ENCODE measurements at regions of chr5 and their contacts with region 1.

Region 1: DNA sequence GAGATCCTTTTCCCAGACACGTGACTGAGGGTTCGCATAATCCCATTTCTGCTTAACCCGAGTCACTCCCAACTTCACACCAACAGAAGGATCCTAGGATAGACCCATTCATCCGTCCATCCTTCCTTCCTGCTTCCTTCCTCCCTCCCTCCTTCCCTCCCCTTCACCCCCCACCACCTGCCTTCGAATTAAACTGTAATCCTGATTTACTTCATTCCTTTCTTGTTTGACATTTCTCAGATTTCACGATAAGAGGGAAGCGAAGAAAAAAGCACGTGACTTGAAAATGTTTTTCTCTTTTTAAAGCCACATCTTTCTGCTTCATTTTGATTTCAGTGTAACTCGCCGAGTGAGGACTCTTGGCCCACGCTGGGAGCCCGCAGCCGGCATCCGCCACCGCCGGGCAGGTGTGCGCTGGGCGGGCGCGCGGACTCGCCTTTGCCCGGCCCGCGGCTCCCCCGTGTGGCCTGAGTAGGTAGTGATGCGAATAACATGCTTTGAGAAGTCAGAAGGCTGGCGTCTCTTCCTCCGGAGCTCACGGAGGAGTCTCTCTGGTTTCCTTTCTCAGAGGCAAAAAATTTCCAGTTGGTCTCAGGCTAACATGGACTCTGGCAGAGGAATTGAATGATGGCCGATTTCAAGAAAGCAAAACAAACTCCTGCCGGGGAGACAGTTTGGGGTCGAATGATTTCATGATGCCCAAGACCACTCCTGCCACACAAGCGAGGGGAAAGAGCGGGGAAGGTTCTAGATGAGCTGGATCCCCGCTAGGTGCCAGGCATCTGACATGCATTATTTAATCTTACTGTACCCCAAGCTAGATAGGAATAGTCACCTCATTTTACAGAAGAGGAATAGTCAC is 117.7 kb downstream of the SLC12A2 start:
- DNase-seq: peak; percentile 73 to 76 (median 74)
- ATAC-seq: peak; percentile 96
- H3K4me3 ChIP-seq: peak overlapping the region; percentile 15; the same call in 1 of the 2 replicates
- H3K27ac ChIP-seq: no peak overlapping the region
- H3K4me1 ChIP-seq: peaks cover 6 to 14% of the 10 kb centered on the region in 2 experiments
- H3K27me3 ChIP-seq: no peaks in the 10 kb centered on the region
- CTCF ChIP-seq: peak; percentile 81 to 86 (median 83)
- EP300 ChIP-seq: no peak
- POLR2A ChIP-seq: no peak
- RAD21 ChIP-seq: peak; percentile 93 to 95

Region 2: DNA sequence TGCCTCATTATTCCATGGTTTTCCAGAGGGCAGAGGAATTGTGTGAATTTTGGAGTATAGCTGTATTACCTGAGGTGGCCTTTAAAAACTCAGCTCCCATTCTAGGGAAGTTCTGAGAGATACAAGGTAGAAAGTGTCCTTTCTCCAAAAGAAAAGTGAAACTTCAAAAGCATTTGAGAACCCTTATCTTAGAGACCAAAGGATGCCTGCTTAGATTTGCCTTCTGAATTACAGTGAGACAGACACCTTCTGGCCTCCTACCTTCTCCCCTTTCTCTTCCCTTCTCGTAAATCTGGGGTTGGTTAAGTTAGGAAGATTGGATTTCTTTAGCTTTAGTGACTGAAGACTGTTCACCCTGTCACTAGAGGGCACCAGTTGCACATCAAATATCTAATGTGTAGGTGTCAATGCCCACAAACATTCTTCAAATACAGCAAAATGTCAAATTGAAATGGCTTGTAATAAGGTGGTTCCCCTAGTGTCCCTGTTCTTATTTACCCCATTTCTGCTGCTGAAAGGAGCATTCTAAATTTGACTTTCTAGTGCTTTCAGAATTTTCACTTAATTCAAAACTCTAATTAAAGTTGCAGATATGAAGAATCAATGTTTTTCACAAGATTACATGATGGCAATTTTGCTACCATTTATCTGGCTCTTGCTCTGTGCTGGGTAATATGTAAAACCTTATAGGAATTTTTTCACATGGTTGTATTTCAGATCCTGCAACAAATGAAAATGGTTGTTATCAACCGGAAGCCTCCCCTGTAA is 637.1 kb before region 1 on chr5:
- CTCF ChIA-PET with region 1: interaction called, 6 read pairs
- POLR2A ChIA-PET with region 1: no interaction called
- in situ Hi-C with region 1: no loop called
- intact Hi-C with region 1: loop called (anchors 1 kb)
- DNase-seq: peak; percentile 27 to 72 (median 38)
- ATAC-seq: peak; percentile 91
- H3K4me3 ChIP-seq: no peak overlapping the region
- H3K27ac ChIP-seq: no peak overlapping the region
- H3K4me1 ChIP-seq: no peaks in the 10 kb centered on the region; a peak in 1 of 5 replicates
- H3K27me3 ChIP-seq: peaks cover 0 to 8% of the 10 kb centered on the region in 2 experiments; a peak in 2 of 5 replicates
- CTCF ChIP-seq: peak; percentile 53 to 77 (median 73); a peak in 5 of 6 replicates
- EP300 ChIP-seq: no peak
- POLR2A ChIP-seq: no peak
- RAD21 ChIP-seq: peak; percentile 73 to 82

Region 3: DNA sequence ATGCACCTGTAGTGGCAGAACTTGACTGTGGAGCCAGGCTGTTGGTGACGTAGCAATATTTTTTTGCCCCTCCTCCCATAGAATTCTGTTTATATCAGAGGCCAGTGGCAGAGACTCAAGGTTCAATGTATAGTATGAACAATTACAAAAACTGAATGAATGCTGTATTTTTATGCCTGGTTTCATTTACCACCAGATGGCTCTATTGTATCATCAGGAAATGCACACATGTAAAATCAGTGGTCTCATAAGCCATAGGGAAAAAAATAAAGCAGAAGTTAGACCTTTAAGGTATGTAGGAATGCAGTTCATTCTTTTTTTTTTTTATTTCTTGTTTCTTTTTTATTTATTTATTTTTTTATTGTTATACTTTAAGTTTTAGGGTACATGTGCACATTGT is 454.5 kb before region 1 on chr5:
- CTCF ChIA-PET with region 1: interaction called, 3 read pairs
- POLR2A ChIA-PET with region 1: no interaction called
- in situ Hi-C with region 1: loop called (anchors 10 kb)
- intact Hi-C with region 1: loop called (anchors 1 kb)
- DNase-seq: peak in 2 of 4 experiments; percentile 18 to 21
- ATAC-seq: peak; percentile 72
- H3K4me3 ChIP-seq: no peak overlapping the region
- H3K27ac ChIP-seq: no peak overlapping the region
- H3K4me1 ChIP-seq: no peaks in the 10 kb centered on the region
- H3K27me3 ChIP-seq: no peaks in the 10 kb centered on the region; a peak in 1 of 5 replicates
- CTCF ChIP-seq: peak; percentile 28 to 62 (median 31); a peak in 4 of 6 replicates
- EP300 ChIP-seq: no peak
- POLR2A ChIP-seq: no peak
- RAD21 ChIP-seq: peak; percentile 53 to 66

Region 4: DNA sequence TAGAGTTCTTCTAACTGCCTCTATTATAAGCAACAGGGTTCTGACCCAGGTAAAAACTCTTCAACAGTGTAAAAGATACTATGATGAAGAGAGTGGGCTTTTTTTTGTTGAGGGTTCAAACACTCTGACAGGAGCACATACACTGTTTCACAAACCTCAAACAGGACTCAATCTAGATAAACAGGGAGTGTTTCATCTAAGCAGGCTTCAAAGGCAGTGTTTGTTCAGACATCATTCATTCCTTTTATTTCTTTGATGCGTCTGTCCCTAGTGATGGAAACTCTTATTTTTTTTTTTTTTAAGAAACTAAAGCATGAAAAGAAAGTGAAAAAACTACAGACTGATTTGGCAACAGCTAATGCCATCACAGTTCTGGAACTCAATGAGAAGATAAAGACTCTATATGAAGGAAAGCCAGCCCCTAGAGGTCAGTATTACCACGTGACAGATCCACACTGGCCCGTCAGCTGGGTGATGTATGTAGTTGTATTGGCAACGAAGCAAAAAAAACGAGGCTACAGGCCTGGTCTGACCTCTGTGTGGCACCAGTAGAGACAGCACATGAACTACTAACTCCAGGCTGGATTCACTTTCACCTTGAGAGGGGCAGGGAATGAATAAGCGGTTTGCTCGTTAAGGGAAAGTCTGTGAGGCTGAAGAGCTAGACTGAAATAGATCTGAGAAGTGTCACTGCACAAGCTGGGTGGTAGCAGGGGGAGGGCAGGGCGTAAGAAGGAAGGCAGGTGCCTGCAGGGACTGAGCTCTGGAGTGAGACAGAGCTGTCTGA is 325.9 kb before region 1 on chr5:
- CTCF ChIA-PET with region 1: interaction called, 8 read pairs
- POLR2A ChIA-PET with region 1: no interaction called
- in situ Hi-C with region 1: loop called (anchors 10 kb)
- intact Hi-C with region 1: loop called (anchors 1 kb)
- DNase-seq: peak; percentile 16 to 56 (median 20)
- ATAC-seq: peak; percentile 90
- H3K4me3 ChIP-seq: no peak overlapping the region
- H3K27ac ChIP-seq: no peak overlapping the region
- H3K4me1 ChIP-seq: no peaks in the 10 kb centered on the region
- H3K27me3 ChIP-seq: peaks cover 0 to 4% of the 10 kb centered on the region in 2 experiments; a peak in 1 of 5 replicates
- CTCF ChIP-seq: peak; percentile 36 to 68 (median 46); a peak in 4 of 6 replicates
- EP300 ChIP-seq: no peak
- POLR2A ChIP-seq: no peak
- RAD21 ChIP-seq: peak; percentile 64

Region 5: GRCh38 chr5:128083033-128083810 is 118.1 kb before region 1 on chr5 and contains the start of gene SLC12A2:
- CTCF ChIA-PET with region 1: no interaction called
- POLR2A ChIA-PET with region 1: no interaction called
- in situ Hi-C with region 1: no loop called
- intact Hi-C with region 1: loop called (anchors 5 kb)
- DNase-seq: peak; percentile 81 to 94 (median 85)
- ATAC-seq: peak; percentile 82
- H3K4me3 ChIP-seq: peak within 1 kb of the TSS; percentile 80
- H3K27ac ChIP-seq: peak within 1 kb of the TSS; percentile 89
- H3K4me1 ChIP-seq: peaks cover 17 to 20% of the 10 kb centered on the region in 2 experiments; a peak in 4 of 5 replicates
- H3K27me3 ChIP-seq: no peaks in the 10 kb centered on the region
- CTCF ChIP-seq: peak in 1 of 3 experiments; percentile 13; a peak in 1 of 6 replicates
- EP300 ChIP-seq: no peak
- POLR2A ChIP-seq: peak; percentile 84
- RAD21 ChIP-seq: no peak
- polyA plus RNA-seq, gene SLC12A2: 5.3 to 5.4 TPM

Region 6: GRCh38 chr5:128315671-128316070 is 114.4 kb after region 1 on chr5:
- CTCF ChIA-PET with region 1: no interaction called
- POLR2A ChIA-PET with region 1: no interaction called
- in situ Hi-C with region 1: no loop called
- intact Hi-C with region 1: no loop called
- DNase-seq: no peak
- ATAC-seq: no peak
- H3K4me3 ChIP-seq: no peak overlapping the region
- H3K27ac ChIP-seq: no peak overlapping the region
- H3K4me1 ChIP-seq: no peaks in the 10 kb centered on the region
- H3K27me3 ChIP-seq: no peaks in the 10 kb centered on the region
- CTCF ChIP-seq: no peak
- EP300 ChIP-seq: no peak
- POLR2A ChIP-seq: no peak
- RAD21 ChIP-seq: no peak